ENCODE measurements at regions of chr17 and their contacts with region 1.

Region 1: GRCh38 chr17:9587969-9588656 is 11.7 kb downstream of the CFAP52 start:
- DNase-seq: no peak
- ATAC-seq: no peak
- H3K4me3 ChIP-seq: no peak overlapping the region
- H3K27ac ChIP-seq: no peak overlapping the region
- H3K4me1 ChIP-seq: no peaks in the 10 kb centered on the region
- H3K27me3 ChIP-seq: no peaks in the 10 kb centered on the region
- CTCF ChIP-seq: no peak
- POLR2A ChIP-seq: no peak

Region 2: GRCh38 chr17:9636501-9636900 is 48.4 kb after region 1 on chr17:
- intact Hi-C with region 1: loop called (anchors 10 kb)
- DNase-seq: no peak
- ATAC-seq: no peak
- H3K4me3 ChIP-seq: no peak overlapping the region
- H3K27ac ChIP-seq: no peak overlapping the region
- H3K4me1 ChIP-seq: no peaks in the 10 kb centered on the region
- H3K27me3 ChIP-seq: no peaks in the 10 kb centered on the region
- CTCF ChIP-seq: no peak
- POLR2A ChIP-seq: no peak

Measured in body of pancreas (tissue), 4 donors.